H1 (cell line): ENCODE measurements at regions of chr10 and their contacts with region 1.

Region 1: GRCh38 chr10:6401562-6402348 is 178.3 kb downstream of the PRKCQ start:
- DNase-seq: peak; percentile 57 to 65
- H3K4me3 ChIP-seq: peak overlapping the region in 1 of 4 experiments; percentile 44; a peak in 2 of 8 replicates
- H3K27ac ChIP-seq: no peak overlapping the region
- H3K4me1 ChIP-seq: no peaks in the 10 kb centered on the region; a peak in 2 of 7 replicates
- H3K27me3 ChIP-seq: no peaks in the 10 kb centered on the region
- CTCF ChIP-seq: peak; percentile 55 to 88 (median 80)
- EP300 ChIP-seq: no peak
- POLR2A ChIP-seq: no peak
- RAD21 ChIP-seq: peak; percentile 93 to 96

Region 2: GRCh38 chr10:6108603-6109443 is 292.9 kb before region 1 on chr10:
- CTCF ChIA-PET with region 1: interaction called, 21 read pairs
- POLR2A ChIA-PET with region 1: no interaction called
- DNase-seq: peak in 1 of 2 experiments; percentile 49
- H3K4me3 ChIP-seq: peak overlapping the region in 1 of 4 experiments; percentile 19; a peak in 1 of 8 replicates
- H3K27ac ChIP-seq: no peak overlapping the region
- H3K4me1 ChIP-seq: peaks cover 4 to 21% (median 10%) of the 10 kb centered on the region in 4 experiments; a peak in 4 of 7 replicates
- H3K27me3 ChIP-seq: no peaks in the 10 kb centered on the region
- CTCF ChIP-seq: peak in 2 of 3 experiments; percentile 47 to 57; a peak in 3 of 4 replicates
- EP300 ChIP-seq: no peak
- POLR2A ChIP-seq: no peak
- RAD21 ChIP-seq: peak; percentile 72 to 76

Region 3: DNA sequence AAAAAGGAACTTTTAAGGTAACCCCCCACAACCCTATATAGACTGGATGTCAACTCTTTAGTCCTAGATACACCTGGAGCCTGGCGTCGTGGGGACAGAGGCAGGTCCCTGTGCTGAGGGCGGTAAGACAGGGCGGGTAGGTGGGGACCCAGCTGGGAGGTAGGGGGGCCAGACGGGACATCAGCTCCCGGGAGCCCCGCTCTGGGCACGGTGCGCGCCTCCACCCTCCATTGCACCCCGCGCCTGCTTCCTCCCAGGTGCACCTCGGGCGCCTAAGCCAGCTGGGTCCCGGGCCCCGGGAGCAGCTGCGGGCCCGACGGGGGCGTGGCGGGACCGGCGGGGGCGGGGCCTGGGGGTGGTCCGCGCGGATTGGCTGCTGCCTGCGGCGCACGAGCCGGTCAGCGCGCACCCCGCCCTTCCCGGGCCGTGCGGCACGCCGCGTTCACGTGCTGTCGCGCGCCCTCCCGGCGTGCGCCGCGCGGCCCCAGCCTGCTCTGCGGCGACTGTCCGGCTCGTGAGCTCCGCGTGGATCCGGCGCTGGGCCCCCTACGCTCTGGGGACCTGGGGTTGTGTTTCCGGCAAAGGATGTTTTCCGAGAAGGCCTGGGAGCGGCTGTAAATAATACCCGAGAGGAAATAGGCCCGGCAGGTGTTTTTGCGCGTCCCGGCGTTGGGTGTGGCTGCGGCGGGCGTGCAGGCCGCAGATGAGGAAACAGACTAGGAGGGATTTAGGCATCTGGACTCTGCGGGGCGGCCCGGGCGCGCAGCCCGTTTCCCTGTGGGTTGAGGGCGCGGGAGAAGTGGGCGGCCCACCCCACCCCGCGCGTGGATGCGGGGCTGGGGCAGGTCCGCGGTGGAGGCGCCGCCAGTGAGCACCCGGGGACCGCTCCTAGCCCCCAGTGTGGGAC is 238.1 kb before region 1 on chr10:
- CTCF ChIA-PET with region 1: interaction called, 15 read pairs
- POLR2A ChIA-PET with region 1: interaction called, 3 read pairs
- DNase-seq: peak in 1 of 2 experiments; percentile 94
- H3K4me3 ChIP-seq: peak overlapping the region; percentile 39 to 88 (median 54)
- H3K27ac ChIP-seq: no peak overlapping the region
- H3K4me1 ChIP-seq: peaks cover 0 to 2% (median 0%) of the 10 kb centered on the region in 4 experiments; a peak in 1 of 7 replicates
- H3K27me3 ChIP-seq: no peaks in the 10 kb centered on the region
- CTCF ChIP-seq: no peak
- EP300 ChIP-seq: no peak
- POLR2A ChIP-seq: peak in 1 of 2 experiments; percentile 49; a peak in 1 of 3 replicates
- RAD21 ChIP-seq: no peak

Region 4: DNA sequence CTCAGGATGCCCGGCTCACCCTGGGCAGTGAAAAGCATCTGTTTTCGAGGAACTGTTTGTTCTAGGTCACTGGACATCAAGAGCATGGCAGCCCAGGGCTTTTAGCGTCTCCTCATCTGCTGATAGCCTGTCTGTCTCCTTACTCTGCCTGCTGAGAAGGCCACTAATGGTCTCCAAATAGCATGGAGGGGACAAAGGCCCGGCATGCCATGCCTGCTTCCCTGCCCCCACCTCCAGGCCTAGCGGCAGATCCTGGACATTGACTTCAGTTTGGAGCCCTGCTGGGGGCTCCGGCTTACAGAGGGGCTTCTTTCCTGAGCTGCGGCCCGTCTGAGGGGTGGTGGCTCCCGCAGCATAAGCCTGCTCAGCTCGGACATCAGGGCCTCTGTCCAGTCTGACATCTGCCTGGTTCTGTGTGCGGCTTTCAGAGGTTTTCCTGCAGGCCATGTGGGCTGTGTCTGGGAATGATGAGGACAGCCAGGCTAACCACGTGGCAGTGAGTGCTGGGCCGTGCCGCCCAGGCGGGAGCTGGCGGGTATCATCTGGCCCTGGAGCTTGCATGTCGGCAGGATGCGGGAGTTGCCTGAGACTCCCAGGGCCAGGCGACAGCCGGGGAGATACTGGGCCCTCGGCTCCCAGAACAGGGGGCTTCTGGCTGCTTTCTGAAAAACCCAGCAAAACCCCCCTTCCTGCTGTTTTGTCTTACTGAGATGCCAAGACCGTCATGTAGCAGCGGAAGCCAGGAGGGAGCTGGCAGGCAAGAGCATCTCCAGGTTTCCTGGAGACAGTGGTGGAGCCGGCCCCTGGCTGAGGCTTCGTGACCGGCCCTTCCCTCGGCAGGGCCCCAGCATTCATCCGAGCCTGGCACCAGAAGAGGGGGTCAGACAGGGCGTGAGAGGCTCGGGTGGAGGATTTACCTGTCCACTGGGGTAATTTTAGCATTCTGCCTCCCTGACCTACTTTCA is 189.8 kb before region 1 on chr10:
- CTCF ChIA-PET with region 1: interaction called, 12 read pairs
- POLR2A ChIA-PET with region 1: interaction called, 3 read pairs
- DNase-seq: peak in 1 of 2 experiments; percentile 50
- H3K4me3 ChIP-seq: no peak overlapping the region
- H3K27ac ChIP-seq: no peak overlapping the region
- H3K4me1 ChIP-seq: peaks cover 0 to 10% (median 5%) of the 10 kb centered on the region in 4 experiments; a peak in 4 of 7 replicates
- H3K27me3 ChIP-seq: no peaks in the 10 kb centered on the region
- CTCF ChIP-seq: no peak
- EP300 ChIP-seq: no peak
- POLR2A ChIP-seq: no peak
- RAD21 ChIP-seq: no peak

Region 5: DNA sequence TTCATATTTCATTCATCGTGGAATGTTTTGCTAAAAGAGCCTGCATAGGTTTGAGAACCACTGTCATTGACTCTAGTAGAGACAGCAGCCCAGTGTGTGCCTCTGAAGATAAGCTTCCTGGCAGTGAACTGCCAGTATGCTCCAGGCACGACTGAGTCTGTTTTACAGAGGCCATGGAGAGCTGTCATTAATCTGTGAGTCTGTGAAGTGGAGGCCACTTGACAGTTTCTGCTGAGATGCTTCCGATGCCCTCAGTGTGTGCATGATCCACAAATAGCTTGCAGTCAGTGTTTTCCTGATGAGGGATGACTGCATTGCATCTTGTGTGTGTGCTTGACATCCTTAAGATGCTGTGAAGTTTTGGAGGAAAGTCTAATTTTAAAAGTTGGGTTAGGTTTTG is 36.9 kb before region 1 on chr10:
- CTCF ChIA-PET with region 1: interaction called, 10 read pairs
- POLR2A ChIA-PET with region 1: interaction called, 3 read pairs
- DNase-seq: no peak
- H3K4me3 ChIP-seq: no peak overlapping the region
- H3K27ac ChIP-seq: no peak overlapping the region
- H3K4me1 ChIP-seq: peaks cover 0 to 14% (median 10%) of the 10 kb centered on the region in 4 experiments; a peak in 5 of 7 replicates
- H3K27me3 ChIP-seq: no peaks in the 10 kb centered on the region
- CTCF ChIP-seq: no peak
- EP300 ChIP-seq: no peak
- POLR2A ChIP-seq: no peak
- RAD21 ChIP-seq: no peak

Region 6: GRCh38 chr10:6445501-6446316 is 44.0 kb after region 1 on chr10:
- CTCF ChIA-PET with region 1: interaction called, 11 read pairs
- POLR2A ChIA-PET with region 1: no interaction called
- DNase-seq: no peak
- H3K4me3 ChIP-seq: no peak overlapping the region
- H3K27ac ChIP-seq: no peak overlapping the region
- H3K4me1 ChIP-seq: no peaks in the 10 kb centered on the region
- H3K27me3 ChIP-seq: no peaks in the 10 kb centered on the region
- CTCF ChIP-seq: peak; percentile 58 to 67 (median 66)
- EP300 ChIP-seq: no peak
- POLR2A ChIP-seq: no peak
- RAD21 ChIP-seq: peak; percentile 60 to 65